ENCODE measurements at regions of chr17 and their contacts with region 1.

Region 1: GRCh38 chr17:19377602-19378392 is 501 bp upstream of the MAPK7 start:
- DNase-seq: peak; percentile 98
- H3K4me3 ChIP-seq: peak overlapping the region; percentile 84
- H3K27ac ChIP-seq: peak overlapping the region; percentile 70
- H3K4me1 ChIP-seq: peaks cover 22% of the 10 kb centered on the region
- CTCF ChIP-seq: no peak

Region 2: GRCh38 chr17:19260958-19261357 is 116.8 kb before region 1 on chr17:
- CTCF ChIA-PET with region 1: no interaction called
- POLR2A ChIA-PET with region 1: no interaction called
- intact Hi-C with region 1: no loop called
- DNase-seq: no peak
- H3K4me3 ChIP-seq: no peak overlapping the region
- H3K27ac ChIP-seq: no peak overlapping the region
- H3K4me1 ChIP-seq: no peaks in the 10 kb centered on the region
- CTCF ChIP-seq: no peak; the same call in 1 of the 2 replicates

Region 3: DNA sequence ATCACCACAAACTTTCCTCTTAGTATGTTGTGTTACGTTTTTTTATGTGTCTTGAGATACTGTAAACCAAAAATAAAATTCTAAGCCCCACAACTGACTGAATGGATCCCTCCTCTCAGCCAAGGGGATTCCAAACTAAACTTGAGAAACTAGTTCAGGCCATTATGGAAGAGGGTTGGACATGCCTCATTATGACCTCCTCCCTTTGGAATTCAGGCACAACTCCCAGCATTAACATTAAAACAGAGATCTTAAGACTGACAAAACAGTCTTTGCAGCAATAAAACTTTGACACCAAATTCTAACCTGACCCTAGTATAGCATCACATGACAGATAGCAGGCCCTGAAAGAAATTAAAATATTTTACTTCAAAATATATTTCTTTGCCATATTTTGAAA is 104.8 kb after region 1 on chr17:
- CTCF ChIA-PET with region 1: no interaction called
- POLR2A ChIA-PET with region 1: no interaction called
- intact Hi-C with region 1: no loop called
- DNase-seq: no peak
- H3K4me3 ChIP-seq: no peak overlapping the region
- H3K27ac ChIP-seq: no peak overlapping the region
- H3K4me1 ChIP-seq: no peaks in the 10 kb centered on the region
- CTCF ChIP-seq: no peak

Region 4: GRCh38 chr17:19507775-19508576 is 130.2 kb after region 1 on chr17:
- CTCF ChIA-PET with region 1: no interaction called
- POLR2A ChIA-PET with region 1: no interaction called
- intact Hi-C with region 1: loop called (anchors 5 kb)
- DNase-seq: peak; percentile 76
- H3K4me3 ChIP-seq: peak overlapping the region; percentile 82
- H3K27ac ChIP-seq: peak overlapping the region; percentile 68
- H3K4me1 ChIP-seq: peaks cover 37% of the 10 kb centered on the region
- CTCF ChIP-seq: no peak

Measured in OCI-LY7 (cell line).